Psoas muscle (tissue), 8 donors: ENCODE measurements at regions of chr6 and their contacts with region 1.

Region 1: DNA sequence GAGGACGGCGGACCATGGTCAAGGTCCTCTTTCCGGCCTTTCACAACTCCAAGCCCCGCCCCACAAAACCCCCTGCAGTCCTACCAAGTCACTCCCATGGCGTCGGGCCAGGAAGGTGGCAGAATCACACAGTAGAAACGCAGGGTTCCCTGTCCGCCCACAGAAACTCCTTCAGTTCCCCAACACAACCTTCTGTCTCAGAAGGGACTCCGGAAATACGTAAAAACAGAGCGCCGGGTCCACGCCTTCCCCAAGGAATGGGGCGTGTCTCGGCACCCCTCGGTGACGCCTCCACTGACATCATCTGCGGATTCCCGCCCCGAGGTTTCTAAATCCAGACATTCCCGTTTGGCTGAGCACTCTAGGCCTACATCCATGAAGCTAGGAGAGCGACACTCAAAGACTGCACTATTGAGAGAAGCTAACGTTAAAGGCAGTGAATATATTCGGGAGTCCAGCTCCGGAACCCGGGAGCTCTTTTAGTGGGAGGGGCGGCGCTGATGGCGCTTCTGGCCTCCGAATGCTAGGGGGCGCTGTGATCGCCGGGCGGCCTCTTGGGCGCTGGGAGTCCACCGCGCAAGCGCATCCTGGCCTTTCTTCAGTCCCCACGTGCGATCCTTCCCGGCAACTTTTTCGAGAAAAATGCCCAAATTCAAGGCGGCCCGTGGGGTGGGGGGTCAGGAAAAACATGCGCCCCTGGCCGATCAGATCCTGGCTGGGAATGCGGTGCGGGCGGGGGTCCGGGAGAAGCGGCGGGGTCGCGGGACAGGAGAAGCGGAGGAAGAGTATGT is at the starts of genes BYSL and MED20:
- DNase-seq: peak; percentile 92 to 96
- ATAC-seq: peak; percentile 97 to 99 (median 98)
- H3K4me3 ChIP-seq: peak within 1 kb of the TSS; percentile 87
- H3K27ac ChIP-seq: peak within 1 kb of the TSS; percentile 99
- H3K4me1 ChIP-seq: peaks cover 30% of the 10 kb centered on the region
- H3K27me3 ChIP-seq: no peaks in the 10 kb centered on the region
- CTCF ChIP-seq: peak; percentile 96
- total RNA-seq, gene BYSL: 20.3 to 47.5 (median 35.2) TPM
- total RNA-seq, gene MED20: 12.9 to 19.6 (median 15.0) TPM

Region 2: GRCh38 chr6:41805830-41806774 is 115.0 kb before region 1 on chr6:
- intact Hi-C with region 1: no loop called
- DNase-seq: no peak
- ATAC-seq: no peak
- H3K4me3 ChIP-seq: no peak overlapping the region
- H3K27ac ChIP-seq: no peak overlapping the region
- H3K4me1 ChIP-seq: no peaks in the 10 kb centered on the region
- H3K27me3 ChIP-seq: no peaks in the 10 kb centered on the region
- CTCF ChIP-seq: no peak

Region 3: DNA sequence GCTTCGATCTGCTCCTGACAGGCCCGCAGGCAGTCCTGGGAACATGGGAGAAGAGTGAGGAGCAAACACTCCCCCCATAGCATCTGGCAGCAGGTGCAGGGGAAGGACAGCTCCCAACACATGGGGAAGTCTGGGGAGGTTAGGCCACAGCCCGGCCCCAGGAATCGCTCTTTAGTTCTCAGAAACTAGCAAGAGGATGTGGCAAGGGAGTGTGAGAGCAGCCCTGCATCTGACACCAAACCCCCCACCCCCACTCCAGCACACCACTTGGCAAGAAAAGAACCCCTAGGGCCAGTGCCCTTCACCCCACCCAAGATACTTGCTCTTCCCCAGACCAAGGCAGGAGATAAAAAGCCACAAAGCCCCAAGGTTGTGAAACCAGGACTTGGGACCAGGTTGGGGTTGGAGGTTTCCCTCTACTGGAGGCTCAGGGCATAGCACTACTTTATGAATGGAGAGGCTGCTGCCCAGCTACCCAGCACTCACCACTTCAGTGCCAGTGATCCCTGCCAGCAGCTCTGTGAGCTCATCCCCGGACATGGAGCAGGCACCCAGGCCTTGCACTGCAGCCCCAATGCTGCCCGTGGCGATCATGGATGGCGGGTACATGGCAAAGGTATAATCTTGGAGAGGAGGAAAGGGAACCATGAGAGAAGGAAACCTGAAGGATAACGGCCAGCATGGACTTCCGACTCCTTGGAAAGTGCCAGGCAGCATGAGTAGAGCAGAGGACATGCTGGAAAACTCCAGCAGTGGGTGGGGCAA is 15.1 kb after region 1 on chr6:
- intact Hi-C with region 1: loop called in 1 of 2 experiments (anchors 2 kb)
- DNase-seq: peak; percentile 67 to 85
- ATAC-seq: peak; percentile 87 to 96 (median 92)
- H3K4me3 ChIP-seq: peak overlapping the region; percentile 2
- H3K27ac ChIP-seq: peak overlapping the region; percentile 7
- H3K4me1 ChIP-seq: peaks cover 18% of the 10 kb centered on the region
- H3K27me3 ChIP-seq: no peaks in the 10 kb centered on the region
- CTCF ChIP-seq: peak; percentile 81

Region 4: DNA sequence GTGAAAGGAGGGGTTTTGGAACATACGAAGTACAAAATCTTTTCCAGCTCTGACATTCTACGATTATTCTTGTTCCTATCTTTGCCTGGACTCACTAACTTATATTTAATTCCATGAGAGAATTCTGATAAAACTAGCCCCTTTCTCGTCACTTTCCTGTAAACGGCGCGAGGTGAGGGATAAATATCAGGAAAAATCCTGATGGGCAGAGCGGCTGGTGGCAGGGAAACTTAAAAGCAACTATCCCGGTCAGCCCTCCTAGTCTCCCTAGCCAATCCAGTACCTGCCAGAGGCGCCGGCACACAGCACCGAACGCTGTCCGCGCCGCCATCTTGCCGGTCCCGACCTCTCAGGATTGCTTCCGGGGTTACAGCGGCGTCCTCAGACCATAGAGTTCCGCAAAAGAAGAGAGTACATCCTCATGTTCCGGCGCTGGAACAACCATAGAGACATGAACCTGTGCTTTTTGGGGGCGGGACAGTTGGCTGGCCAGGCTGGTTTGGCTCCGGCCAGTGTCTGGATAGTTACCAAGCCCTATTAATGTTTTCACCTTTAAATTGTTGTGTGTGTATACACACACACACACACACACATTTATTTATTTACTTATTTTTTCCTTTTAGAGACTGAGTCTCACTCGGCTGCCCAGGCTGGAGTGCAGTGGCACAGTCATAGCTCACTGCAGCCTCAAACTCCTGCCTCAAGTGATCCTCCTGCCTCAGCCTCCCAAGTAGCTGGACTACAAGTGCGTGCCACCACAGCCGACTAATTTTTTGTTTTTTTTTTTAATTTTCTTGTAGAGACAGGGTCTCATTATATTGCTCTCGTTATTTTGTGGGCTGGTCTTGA is 296.6 kb after region 1 on chr6 and contains the start of gene MRPS10:
- intact Hi-C with region 1: loop called (anchors 5 kb)
- DNase-seq: peak; percentile 92 to 96
- ATAC-seq: peak; percentile 99 to 100 (median 100)
- H3K4me3 ChIP-seq: peak within 1 kb of the TSS; percentile 85
- H3K27ac ChIP-seq: peak within 1 kb of the TSS; percentile 83
- H3K4me1 ChIP-seq: peaks cover 8% of the 10 kb centered on the region
- H3K27me3 ChIP-seq: no peaks in the 10 kb centered on the region
- CTCF ChIP-seq: no peak
- total RNA-seq, gene MRPS10: 40.3 to 57.4 (median 53.1) TPM